Cardiac septum (tissue), 1 donor: ENCODE measurements at regions of chr20 and their contacts with region 1.

Region 1: DNA sequence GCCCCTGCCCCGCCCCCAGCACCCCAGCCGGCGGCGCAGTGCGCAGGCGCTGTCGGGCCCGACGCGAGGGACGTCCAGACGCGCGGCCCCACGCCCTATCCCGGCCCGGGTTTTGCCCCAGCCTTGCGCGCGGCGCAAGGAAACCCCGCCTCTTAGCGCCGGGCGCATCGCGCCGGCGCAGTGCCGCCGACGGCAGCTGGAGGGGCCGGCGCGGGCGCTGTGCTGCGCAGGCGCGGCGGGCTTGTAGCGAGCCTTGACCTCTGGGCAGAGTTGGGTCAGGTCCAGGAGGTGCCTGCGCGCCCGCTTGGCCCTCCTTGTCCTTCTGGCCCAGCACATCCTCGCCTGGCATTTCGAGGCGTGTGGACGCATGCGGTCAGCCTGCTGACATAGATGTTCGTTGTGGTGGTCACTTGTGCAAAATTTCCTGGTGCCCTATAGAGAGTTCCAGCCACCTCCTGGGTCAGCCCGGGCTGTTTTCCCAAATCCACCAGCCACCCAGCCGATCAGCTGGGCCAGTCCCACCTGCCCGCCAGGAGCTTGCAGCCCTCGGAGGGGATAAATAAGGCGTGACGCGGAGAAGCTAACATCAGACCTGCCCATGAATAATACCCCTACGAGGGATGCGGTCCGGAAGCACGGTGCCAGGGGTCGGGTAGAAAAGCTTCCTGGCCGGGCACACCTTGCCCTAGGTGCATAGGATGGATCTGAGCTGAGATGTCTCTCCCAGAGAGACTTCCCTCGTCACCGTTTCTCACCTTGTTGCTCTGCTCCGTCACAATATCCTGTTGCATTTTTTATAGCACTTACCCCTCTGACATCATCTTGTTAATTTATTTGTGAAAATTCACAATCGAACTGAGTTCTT is 442 bp upstream of the PRELID3B start:
- DNase-seq: peak; percentile 97

Region 2: GRCh38 chr20:58890518-58891085 is 152.4 kb before region 1 on chr20:
- intact Hi-C with region 1: loop called (anchors 2 kb)
- DNase-seq: peak; percentile 88

Region 3: GRCh38 chr20:59032023-59032712 is 10.9 kb before region 1 on chr20 and contains the start of gene ATP5F1E:
- intact Hi-C with region 1: loop called (anchors 1 kb)
- DNase-seq: peak; percentile 97
- total RNA-seq, gene ATP5F1E: 123 TPM